Activated CD4-positive, alpha-beta T cell treated with anti-CD3 and anti-CD28 coated beads for 36 hours (primary cell): ENCODE measurements at regions of chr10 and their contacts with region 1.

Region 1: DNA sequence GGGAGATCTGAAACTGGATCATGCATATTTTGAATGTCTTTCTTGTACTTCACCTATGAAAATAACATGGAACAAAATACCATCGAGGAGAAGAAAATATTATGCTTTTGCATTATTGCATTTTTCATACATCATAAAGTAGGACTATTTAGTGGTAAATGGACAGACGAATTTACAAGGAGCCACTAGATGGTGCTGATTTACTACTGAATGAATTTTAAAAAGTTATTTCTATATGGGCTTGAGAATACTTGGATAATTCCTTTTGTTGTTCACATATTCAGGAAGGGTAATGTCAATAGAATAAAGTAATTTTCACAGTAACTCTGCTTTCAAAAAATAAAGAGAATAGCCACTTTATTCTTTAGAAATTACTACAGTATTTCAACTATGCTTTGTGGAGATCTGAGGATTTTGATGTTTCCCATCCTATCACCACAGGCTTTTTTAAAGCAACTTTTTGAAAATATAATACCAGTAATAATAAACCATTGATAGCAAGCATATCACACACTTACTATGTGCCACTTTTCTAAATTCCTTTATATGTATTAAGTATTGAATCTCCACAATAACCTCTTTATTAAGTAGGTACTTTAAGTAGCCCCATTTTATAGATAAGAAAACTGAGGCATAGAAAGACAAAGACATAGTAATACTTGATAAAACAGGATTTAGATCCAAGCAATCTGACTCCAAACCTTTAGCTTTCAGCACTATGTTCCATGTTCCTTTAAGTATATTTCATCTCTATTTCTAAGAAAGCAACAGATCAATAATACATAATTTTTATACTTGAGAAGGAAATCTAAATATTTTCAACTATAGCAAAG is 38.6 kb downstream of the NEBL start:
- DNase-seq: no peak
- ATAC-seq: no peak
- H3K4me3 Mint-ChIP-seq: no peak overlapping the region
- H3K27ac Mint-ChIP-seq: no peak overlapping the region
- H3K4me1 Mint-ChIP-seq: no peaks in the 10 kb centered on the region
- H3K27me3 Mint-ChIP-seq: peaks cover 6% of the 10 kb centered on the region

Region 2: DNA sequence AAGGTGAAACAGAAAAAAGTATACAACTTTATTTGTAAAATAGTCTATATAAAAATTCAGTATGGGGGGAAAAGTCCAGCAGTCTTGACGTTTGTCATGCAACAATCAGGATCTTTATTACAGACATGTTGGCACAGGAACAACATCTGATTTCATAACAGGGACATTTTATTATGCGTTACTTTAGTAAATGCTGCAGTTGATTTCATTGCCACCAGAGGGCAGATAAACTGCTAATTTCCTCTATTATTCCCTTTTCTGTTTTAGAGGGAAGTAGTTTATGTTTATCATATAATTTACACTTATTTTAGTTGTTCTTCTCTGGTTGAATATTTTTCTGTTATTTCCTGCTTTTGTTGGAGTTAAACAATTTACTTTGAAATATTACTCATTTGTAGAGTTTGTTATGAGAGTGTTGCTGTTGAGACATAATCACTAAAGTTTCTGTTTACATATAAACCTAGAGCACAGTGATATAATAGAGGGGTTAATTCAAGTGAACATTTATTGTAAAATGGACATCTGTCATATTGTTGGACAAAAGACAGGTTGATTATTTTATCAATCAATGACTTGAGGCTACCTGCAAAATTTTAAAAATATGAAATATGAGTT is 1039.0 kb before region 1 on chr10:
- CTCF ChIA-PET with region 1: no interaction called
- POLR2A ChIA-PET with region 1: no interaction called
- intact Hi-C with region 1: loop called in 1 of 2 experiments (anchors 2 kb)
- DNase-seq: peak; percentile 6
- ATAC-seq: no peak
- H3K4me3 Mint-ChIP-seq: no peak overlapping the region
- H3K27ac Mint-ChIP-seq: no peak overlapping the region
- H3K4me1 Mint-ChIP-seq: peaks cover 5% of the 10 kb centered on the region
- H3K27me3 Mint-ChIP-seq: peaks cover 29% of the 10 kb centered on the region

Region 3: DNA sequence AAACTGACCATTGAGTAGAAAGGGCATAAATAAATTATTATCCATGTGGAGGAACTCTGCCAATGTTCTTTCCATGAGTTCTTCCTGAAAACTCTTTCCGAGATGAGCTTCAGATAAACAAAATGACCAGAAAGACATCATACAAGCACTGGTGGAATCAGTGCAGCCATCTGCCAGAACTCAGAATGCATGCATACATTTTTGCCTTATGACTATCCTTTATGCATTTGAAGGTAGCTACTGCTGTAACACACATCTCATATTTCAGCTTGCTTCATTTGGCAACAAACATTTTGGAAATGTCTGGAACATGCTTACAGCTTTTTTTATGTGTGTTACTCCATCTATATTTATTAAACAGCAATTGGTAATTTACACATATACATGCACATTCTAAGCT is 593.4 kb before region 1 on chr10:
- CTCF ChIA-PET with region 1: no interaction called
- POLR2A ChIA-PET with region 1: no interaction called
- intact Hi-C with region 1: no loop called
- DNase-seq: no peak
- ATAC-seq: no peak
- H3K4me3 Mint-ChIP-seq: no peak overlapping the region
- H3K27ac Mint-ChIP-seq: no peak overlapping the region
- H3K4me1 Mint-ChIP-seq: no peaks in the 10 kb centered on the region
- H3K27me3 Mint-ChIP-seq: no peaks in the 10 kb centered on the region

Region 4: GRCh38 chr10:21020545-21020944 is 162.0 kb after region 1 on chr10:
- CTCF ChIA-PET with region 1: no interaction called
- POLR2A ChIA-PET with region 1: no interaction called
- intact Hi-C with region 1: loop called in 1 of 2 experiments (anchors 10 kb)
- DNase-seq: peak; percentile 69
- ATAC-seq: no peak
- H3K4me3 Mint-ChIP-seq: no peak overlapping the region
- H3K27ac Mint-ChIP-seq: no peak overlapping the region
- H3K4me1 Mint-ChIP-seq: no peaks in the 10 kb centered on the region
- H3K27me3 Mint-ChIP-seq: peaks cover 2% of the 10 kb centered on the region